Activated CD4-positive, alpha-beta T cell treated with anti-CD3 and anti-CD28 coated beads for 36 hours (primary cell): ENCODE measurements at regions of chr10 and their contacts with region 1.

Region 1: GRCh38 chr10:111076191-111076681 is 593 bp upstream of the ADRA2A start:
- DNase-seq: peak; percentile 78
- ATAC-seq: peak; percentile 81
- H3K4me3 Mint-ChIP-seq: peak overlapping the region; percentile 52
- H3K27ac Mint-ChIP-seq: no peak overlapping the region
- H3K4me1 Mint-ChIP-seq: peaks cover 9% of the 10 kb centered on the region
- H3K27me3 Mint-ChIP-seq: peaks cover 66% of the 10 kb centered on the region

Region 2: DNA sequence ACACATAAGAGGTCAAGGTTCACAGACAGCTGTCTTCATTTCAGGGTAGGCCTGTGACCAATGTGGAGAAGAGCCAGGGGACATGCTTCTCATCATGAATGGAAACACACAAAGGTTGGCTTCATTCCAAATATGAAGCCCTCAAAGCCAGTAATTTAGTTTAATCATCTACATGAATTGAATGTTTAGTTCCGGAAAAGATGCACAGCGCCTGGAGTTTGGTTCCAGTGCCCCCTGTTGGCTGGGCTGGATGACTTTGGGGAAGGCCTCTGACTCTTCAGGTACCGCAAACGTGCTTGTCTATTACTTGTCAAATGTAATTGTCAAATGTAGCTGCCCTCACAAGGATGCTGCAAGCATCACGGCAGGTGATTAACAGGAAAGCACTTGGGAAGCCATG is 131.3 kb after region 1 on chr10:
- CTCF ChIA-PET with region 1: interaction called, 8 read pairs
- POLR2A ChIA-PET with region 1: no interaction called
- intact Hi-C with region 1: loop called (anchors 1 to 5 kb)
- DNase-seq: peak; percentile 59
- ATAC-seq: no peak
- H3K4me3 Mint-ChIP-seq: no peak overlapping the region
- H3K27ac Mint-ChIP-seq: no peak overlapping the region
- H3K4me1 Mint-ChIP-seq: no peaks in the 10 kb centered on the region
- H3K27me3 Mint-ChIP-seq: peaks cover 4% of the 10 kb centered on the region

Region 3: GRCh38 chr10:111360260-111360925 is 284.2 kb after region 1 on chr10:
- CTCF ChIA-PET with region 1: no interaction called
- POLR2A ChIA-PET with region 1: no interaction called
- intact Hi-C with region 1: loop called in 1 of 2 experiments (anchors 5 kb)
- DNase-seq: peak; percentile 20
- ATAC-seq: peak; percentile 65
- H3K4me3 Mint-ChIP-seq: no peak overlapping the region
- H3K27ac Mint-ChIP-seq: no peak overlapping the region
- H3K4me1 Mint-ChIP-seq: no peaks in the 10 kb centered on the region
- H3K27me3 Mint-ChIP-seq: peaks cover 10% of the 10 kb centered on the region

Region 4: GRCh38 chr10:111531690-111532089 is 455.5 kb after region 1 on chr10:
- CTCF ChIA-PET with region 1: no interaction called
- POLR2A ChIA-PET with region 1: no interaction called
- intact Hi-C with region 1: no loop called
- DNase-seq: no peak
- ATAC-seq: no peak
- H3K4me3 Mint-ChIP-seq: no peak overlapping the region
- H3K27ac Mint-ChIP-seq: no peak overlapping the region
- H3K4me1 Mint-ChIP-seq: no peaks in the 10 kb centered on the region
- H3K27me3 Mint-ChIP-seq: peaks cover 9% of the 10 kb centered on the region

Region 5: GRCh38 chr10:111598436-111599059 is 522.3 kb after region 1 on chr10:
- CTCF ChIA-PET with region 1: interaction called, 6 read pairs
- POLR2A ChIA-PET with region 1: no interaction called
- intact Hi-C with region 1: loop called (anchors 2 to 10 kb)
- DNase-seq: peak; percentile 64
- ATAC-seq: peak; percentile 47
- H3K4me3 Mint-ChIP-seq: no peak overlapping the region
- H3K27ac Mint-ChIP-seq: no peak overlapping the region
- H3K4me1 Mint-ChIP-seq: no peaks in the 10 kb centered on the region
- H3K27me3 Mint-ChIP-seq: peaks cover 4% of the 10 kb centered on the region